MCF 10A (cell line): ENCODE measurements at regions of chr7 and their contacts with region 1.

Region 1: DNA sequence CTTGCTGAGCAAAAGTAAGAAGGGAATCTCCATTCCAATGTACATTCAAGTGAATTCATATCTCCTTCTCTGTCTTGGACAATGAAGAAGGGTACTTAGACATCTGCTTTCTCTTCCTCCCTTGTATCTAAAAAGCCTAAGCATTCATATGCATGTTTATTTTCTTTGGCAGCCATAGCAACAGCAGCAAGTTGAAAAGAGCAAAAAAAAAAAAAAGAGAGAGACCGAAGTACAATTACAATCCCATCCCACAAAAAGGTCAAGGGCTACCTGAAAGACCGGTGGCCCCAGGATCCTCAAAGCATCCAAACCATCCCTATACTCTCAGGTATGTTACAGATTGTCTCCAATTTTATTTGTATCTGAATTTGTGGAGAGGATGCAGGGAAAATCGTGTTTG is 4.1 kb downstream of the OR2F1 start:
- DNase-seq: no peak
- H3K4me3 Mint-ChIP-seq: no peak overlapping the region
- H3K27ac Mint-ChIP-seq: no peak overlapping the region
- H3K4me1 Mint-ChIP-seq: peaks cover 5% of the 10 kb centered on the region
- H3K27me3 Mint-ChIP-seq: peaks cover 26% of the 10 kb centered on the region
- CTCF ChIP-seq: no peak

Region 2: DNA sequence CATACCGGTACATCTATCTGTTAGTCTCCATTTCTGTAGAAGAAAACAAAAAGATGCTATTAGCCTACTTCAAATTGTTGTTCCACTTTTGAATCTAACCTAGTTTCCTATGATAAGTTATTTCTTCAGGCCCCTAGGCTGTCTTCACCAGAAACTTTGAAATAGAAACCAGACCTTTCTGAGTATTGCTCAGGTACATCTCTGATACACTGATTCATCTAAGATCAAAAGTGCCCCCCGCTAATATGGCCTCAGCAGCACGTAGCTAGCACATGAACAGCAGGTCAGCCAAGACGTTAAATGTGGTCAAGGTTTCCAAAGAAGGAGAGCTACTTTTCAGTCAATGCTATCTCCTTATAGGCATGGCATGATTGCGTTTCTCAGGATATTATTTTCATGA is 224.9 kb before region 1 on chr7:
- CTCF ChIA-PET with region 1: no interaction called
- POLR2A ChIA-PET with region 1: no interaction called
- intact Hi-C with region 1: no loop called
- DNase-seq: no peak
- H3K4me3 Mint-ChIP-seq: no peak overlapping the region
- H3K27ac Mint-ChIP-seq: no peak overlapping the region
- H3K4me1 Mint-ChIP-seq: no peaks in the 10 kb centered on the region
- H3K27me3 Mint-ChIP-seq: no peaks in the 10 kb centered on the region
- CTCF ChIP-seq: no peak

Region 3: GRCh38 chr7:143973870-143974416 is 15.2 kb after region 1 on chr7:
- CTCF ChIA-PET with region 1: no interaction called
- POLR2A ChIA-PET with region 1: no interaction called
- intact Hi-C with region 1: no loop called
- DNase-seq: no peak
- H3K4me3 Mint-ChIP-seq: no peak overlapping the region
- H3K27ac Mint-ChIP-seq: no peak overlapping the region
- H3K4me1 Mint-ChIP-seq: peaks cover 9% of the 10 kb centered on the region
- H3K27me3 Mint-ChIP-seq: no peaks in the 10 kb centered on the region
- CTCF ChIP-seq: no peak

Region 4: GRCh38 chr7:144006029-144006691 is 47.4 kb after region 1 on chr7:
- CTCF ChIA-PET with region 1: no interaction called
- POLR2A ChIA-PET with region 1: no interaction called
- intact Hi-C with region 1: loop called (anchors 5 kb)
- DNase-seq: no peak
- H3K4me3 Mint-ChIP-seq: no peak overlapping the region
- H3K27ac Mint-ChIP-seq: no peak overlapping the region
- H3K4me1 Mint-ChIP-seq: peaks cover 6% of the 10 kb centered on the region
- H3K27me3 Mint-ChIP-seq: no peaks in the 10 kb centered on the region
- CTCF ChIP-seq: no peak

Region 5: DNA sequence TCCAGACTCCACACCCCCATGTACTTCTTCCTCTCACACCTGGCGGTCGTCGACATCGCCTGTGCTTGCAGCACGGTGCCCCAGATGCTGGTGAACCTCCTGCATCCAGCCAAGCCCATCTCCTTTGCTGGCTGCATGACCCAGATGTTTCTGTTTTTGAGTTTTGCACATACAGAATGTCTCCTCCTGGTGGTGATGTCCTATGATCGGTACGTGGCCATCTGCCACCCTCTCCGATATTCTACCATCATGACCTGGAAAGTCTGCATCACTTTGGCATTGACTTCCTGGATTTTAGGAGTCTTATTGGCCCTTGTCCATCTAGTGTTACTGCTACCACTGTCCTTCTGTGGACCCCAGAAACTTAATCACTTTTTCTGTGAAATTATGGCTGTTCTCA is 115.6 kb after region 1 on chr7:
- CTCF ChIA-PET with region 1: no interaction called
- POLR2A ChIA-PET with region 1: no interaction called
- intact Hi-C with region 1: loop called (anchors 5 kb)
- DNase-seq: no peak
- H3K4me3 Mint-ChIP-seq: no peak overlapping the region
- H3K27ac Mint-ChIP-seq: no peak overlapping the region
- H3K4me1 Mint-ChIP-seq: no peaks in the 10 kb centered on the region
- H3K27me3 Mint-ChIP-seq: peaks cover 11% of the 10 kb centered on the region
- CTCF ChIP-seq: no peak

Region 6: DNA sequence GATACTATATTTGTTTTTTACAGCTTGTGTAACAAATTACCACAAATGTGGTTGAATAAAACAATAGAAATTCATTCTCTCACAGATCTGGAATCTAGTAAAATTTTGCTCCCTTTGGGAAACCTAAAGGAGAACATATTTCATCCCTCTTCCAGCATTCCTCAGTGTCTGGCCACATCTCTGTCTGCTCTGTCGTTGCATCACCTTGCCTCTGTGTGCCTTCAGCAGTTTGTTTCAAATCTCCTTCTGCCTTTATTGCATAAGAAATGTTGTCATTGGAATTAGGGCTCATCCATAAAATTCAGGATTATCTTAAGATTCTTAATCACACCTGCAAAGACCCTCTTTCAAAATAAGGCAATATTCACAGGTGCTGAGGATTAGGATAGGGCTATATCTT is 178.7 kb after region 1 on chr7:
- CTCF ChIA-PET with region 1: no interaction called
- POLR2A ChIA-PET with region 1: no interaction called
- intact Hi-C with region 1: no loop called
- DNase-seq: peak; percentile 12
- H3K4me3 Mint-ChIP-seq: no peak overlapping the region
- H3K27ac Mint-ChIP-seq: no peak overlapping the region
- H3K4me1 Mint-ChIP-seq: no peaks in the 10 kb centered on the region
- H3K27me3 Mint-ChIP-seq: no peaks in the 10 kb centered on the region
- CTCF ChIP-seq: no peak